ENCODE measurements at regions of chrX and their contacts with region 1.

Region 1: GRCh38 chrX:153927922-153928760 is 2.1 kb upstream of the ARHGAP4 start:
- DNase-seq: peak; percentile 97
- H3K4me3 Mint-ChIP-seq: peak overlapping the region; percentile 91
- H3K27ac Mint-ChIP-seq: peak overlapping the region; percentile 98
- H3K4me1 Mint-ChIP-seq: peaks cover 21% of the 10 kb centered on the region
- H3K27me3 Mint-ChIP-seq: no peaks in the 10 kb centered on the region

Region 2: GRCh38 chrX:152958524-152959465 is 969.3 kb before region 1 on chrX:
- intact Hi-C with region 1: loop called (anchors 10 kb)
- DNase-seq: peak; percentile 96
- H3K4me3 Mint-ChIP-seq: peak overlapping the region; percentile 72
- H3K27ac Mint-ChIP-seq: peak overlapping the region; percentile 91
- H3K4me1 Mint-ChIP-seq: peaks cover 7% of the 10 kb centered on the region
- H3K27me3 Mint-ChIP-seq: peaks cover 2% of the 10 kb centered on the region

Region 3: GRCh38 chrX:153763989-153764755 is 164.0 kb before region 1 on chrX and contains the start of gene PLXNB3:
- intact Hi-C with region 1: loop called (anchors 1 kb)
- DNase-seq: peak; percentile 92
- H3K4me3 Mint-ChIP-seq: no peak within 1 kb of the TSS
- H3K27ac Mint-ChIP-seq: no peak within 1 kb of the TSS
- H3K4me1 Mint-ChIP-seq: peaks cover 6% of the 10 kb centered on the region
- H3K27me3 Mint-ChIP-seq: no peaks in the 10 kb centered on the region
- total RNA-seq, gene PLXNB3: 0.43 and 0.49 TPM in 2 replicates

Region 4: GRCh38 chrX:153875391-153876111 is 52.6 kb before region 1 on chrX:
- intact Hi-C with region 1: loop called (anchors 10 kb)
- DNase-seq: peak; percentile 93
- H3K4me3 Mint-ChIP-seq: no peak overlapping the region
- H3K27ac Mint-ChIP-seq: no peak overlapping the region
- H3K4me1 Mint-ChIP-seq: peaks cover 18% of the 10 kb centered on the region
- H3K27me3 Mint-ChIP-seq: peaks cover 17% of the 10 kb centered on the region

Region 5: GRCh38 chrX:153900831-153901752 is 27.0 kb before region 1 on chrX:
- intact Hi-C with region 1: no loop called
- DNase-seq: peak; percentile 88
- H3K4me3 Mint-ChIP-seq: peak overlapping the region; percentile 74
- H3K27ac Mint-ChIP-seq: peak overlapping the region; percentile 82
- H3K4me1 Mint-ChIP-seq: peaks cover 26% of the 10 kb centered on the region
- H3K27me3 Mint-ChIP-seq: peaks cover 4% of the 10 kb centered on the region

Region 6: GRCh38 chrX:153971450-153972367 is 43.6 kb after region 1 on chrX and contains the start of gene HCFC1:
- intact Hi-C with region 1: loop called (anchors 1 kb)
- DNase-seq: peak; percentile 96
- H3K4me3 Mint-ChIP-seq: peak within 1 kb of the TSS; percentile 98
- H3K27ac Mint-ChIP-seq: peak within 1 kb of the TSS; percentile 100
- H3K4me1 Mint-ChIP-seq: peaks cover 30% of the 10 kb centered on the region
- H3K27me3 Mint-ChIP-seq: no peaks in the 10 kb centered on the region
- total RNA-seq, gene HCFC1: 107 and 109 TPM in 2 replicates

Region 7: GRCh38 chrX:154002215-154002719 is 74.1 kb after region 1 on chrX:
- intact Hi-C with region 1: no loop called
- DNase-seq: peak; percentile 75
- H3K4me3 Mint-ChIP-seq: peak overlapping the region; percentile 62
- H3K27ac Mint-ChIP-seq: peak overlapping the region; percentile 88
- H3K4me1 Mint-ChIP-seq: peaks cover 11% of the 10 kb centered on the region
- H3K27me3 Mint-ChIP-seq: no peaks in the 10 kb centered on the region

Region 8: DNA sequence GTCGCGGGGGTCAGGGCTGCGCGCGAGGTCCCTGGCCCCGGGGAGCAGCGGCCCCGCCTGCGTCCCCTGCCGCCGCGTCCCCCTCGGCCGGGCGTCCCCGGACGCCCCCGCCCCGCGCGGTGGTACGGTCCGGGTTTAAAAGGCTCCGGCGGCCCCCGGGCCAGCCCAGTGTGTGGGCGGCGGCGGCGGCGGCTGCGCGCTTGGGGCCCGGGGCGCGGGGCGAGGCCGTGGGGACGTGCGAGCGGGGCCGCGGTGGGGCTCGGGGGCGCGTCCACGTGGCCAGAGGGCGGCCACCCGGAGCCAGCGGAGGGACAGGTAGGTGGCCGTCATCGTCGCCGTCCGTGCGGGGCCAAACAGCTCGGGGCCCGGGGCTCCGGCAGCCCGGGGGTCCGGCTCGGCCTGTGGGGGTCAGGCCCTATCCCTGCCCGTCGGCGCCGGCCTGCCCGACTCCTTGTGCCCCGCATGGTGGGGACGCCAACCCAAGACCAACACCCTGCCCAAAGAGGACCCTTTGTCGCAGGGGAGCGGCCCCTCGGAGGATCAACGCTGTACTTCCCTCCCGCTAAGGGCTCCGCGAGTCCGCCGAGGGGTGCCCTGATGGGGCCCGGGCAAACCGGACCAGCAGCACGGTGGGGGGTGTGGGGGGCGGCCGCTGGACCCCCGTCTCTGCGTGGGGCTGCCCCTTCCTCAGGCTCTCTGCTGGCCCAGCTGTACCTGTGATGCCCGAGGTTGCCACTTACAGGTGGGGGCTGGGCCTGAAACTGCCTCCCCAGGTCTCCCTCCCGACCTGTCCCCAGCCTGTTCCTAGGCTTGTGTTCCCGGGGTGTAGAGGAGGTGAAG is 530.2 kb after region 1 on chrX and contains the start of gene PLXNA3:
- intact Hi-C with region 1: no loop called
- DNase-seq: peak; percentile 89
- H3K4me3 Mint-ChIP-seq: peak within 1 kb of the TSS; percentile 93
- H3K27ac Mint-ChIP-seq: peak within 1 kb of the TSS; percentile 96
- H3K4me1 Mint-ChIP-seq: peaks cover 6% of the 10 kb centered on the region
- H3K27me3 Mint-ChIP-seq: no peaks in the 10 kb centered on the region
- total RNA-seq, gene PLXNA3: 48.3 and 55.9 TPM in 2 replicates

Measured in activated CD4-positive, alpha-beta T cell treated with anti-CD3 and anti-CD28 coated beads, Interleukin-2, amount 10 ng/mL, durations not matched to agents 24 days and 14 days (primary cell).